ENCODE measurements at regions of chr12 and their contacts with region 1.

Region 1: GRCh38 chr12:89461649-89462612 is 62.7 kb downstream of the GALNT4 start:
- DNase-seq: no peak

Region 2: DNA sequence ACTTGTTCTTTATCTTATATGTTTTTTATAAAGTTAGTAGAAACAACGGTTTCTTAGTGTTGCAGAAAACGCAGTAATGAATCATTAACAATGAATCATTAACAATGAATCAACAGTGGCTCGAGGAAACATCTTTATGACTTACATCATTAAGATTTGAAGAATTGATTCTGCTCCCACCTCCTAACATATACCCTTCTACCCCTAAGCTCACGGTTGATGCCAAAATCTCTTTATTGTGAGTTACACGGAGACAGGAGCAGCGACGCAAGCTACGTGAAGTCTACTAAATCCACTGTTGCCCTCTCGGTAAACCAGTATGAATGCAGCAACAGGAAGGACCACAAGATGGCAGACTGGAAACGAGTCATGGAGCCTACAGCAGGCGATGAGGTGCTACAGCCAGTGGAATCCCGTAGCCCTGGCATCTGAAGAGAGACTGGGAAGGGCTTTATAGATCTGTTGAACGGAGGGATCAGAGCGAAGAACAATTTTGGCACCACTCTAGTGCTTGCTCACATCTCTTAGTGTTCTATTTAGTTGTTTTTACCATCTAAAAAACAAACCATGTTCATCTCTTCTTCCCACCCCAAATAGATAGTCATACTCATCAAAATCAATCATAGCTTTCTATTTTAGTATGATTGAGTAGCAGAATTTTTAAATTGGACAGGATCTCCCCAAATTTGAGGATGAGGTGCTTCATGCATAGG is 442.4 kb before region 1 on chr12:
- intact Hi-C with region 1: loop called (anchors 1 kb)
- DNase-seq: peak; percentile 80

Region 3: GRCh38 chr12:89051065-89051677 is 410.8 kb before region 1 on chr12:
- intact Hi-C with region 1: loop called (anchors 2 kb)
- DNase-seq: no peak

Region 4: DNA sequence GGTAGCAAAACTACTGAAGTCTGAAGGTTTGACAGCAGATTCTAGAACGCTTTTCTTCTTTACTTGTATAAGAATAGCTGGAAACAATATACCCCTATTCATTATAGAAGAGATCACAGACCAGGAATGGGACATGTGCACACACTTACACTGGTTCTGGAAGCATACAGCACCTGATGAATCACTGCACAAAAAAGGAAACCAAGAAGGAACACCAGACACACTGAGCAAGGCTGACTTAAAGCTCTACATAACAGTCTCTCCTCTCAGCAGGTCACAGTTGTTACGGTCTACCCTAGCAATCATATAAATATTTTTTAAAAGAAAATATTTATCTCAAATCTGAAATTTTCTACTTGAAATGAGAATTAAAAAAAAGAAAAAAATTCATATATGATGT is 233.2 kb after region 1 on chr12:
- intact Hi-C with region 1: no loop called
- DNase-seq: no peak

Measured in cardiac septum (tissue), 1 donor.